Naive thymus-derived CD4-positive, alpha-beta T cell (primary cell): ENCODE measurements at regions of chr12 and their contacts with region 1.

Region 1: GRCh38 chr12:67161322-67161918 is 107.7 kb upstream of the CAND1 start:
- DNase-seq: peak in 7 of 9 donors; percentile 8 to 27 (median 21)
- ATAC-seq: no peak
- H3K4me3 ChIP-seq: no peak overlapping the region
- H3K4me3 Mint-ChIP-seq: no peak overlapping the region
- H3K27ac ChIP-seq: no peak overlapping the region
- H3K27ac Mint-ChIP-seq: no peak overlapping the region
- H3K4me1 ChIP-seq: no peaks in the 10 kb centered on the region
- H3K4me1 Mint-ChIP-seq: peaks cover 0 to 3% (median 0%) of the 10 kb centered on the region in 7 donors
- H3K27me3 ChIP-seq: no peaks in the 10 kb centered on the region
- H3K27me3 Mint-ChIP-seq: peaks cover 0 to 6% (median 4%) of the 10 kb centered on the region in 5 donors

Region 2: DNA sequence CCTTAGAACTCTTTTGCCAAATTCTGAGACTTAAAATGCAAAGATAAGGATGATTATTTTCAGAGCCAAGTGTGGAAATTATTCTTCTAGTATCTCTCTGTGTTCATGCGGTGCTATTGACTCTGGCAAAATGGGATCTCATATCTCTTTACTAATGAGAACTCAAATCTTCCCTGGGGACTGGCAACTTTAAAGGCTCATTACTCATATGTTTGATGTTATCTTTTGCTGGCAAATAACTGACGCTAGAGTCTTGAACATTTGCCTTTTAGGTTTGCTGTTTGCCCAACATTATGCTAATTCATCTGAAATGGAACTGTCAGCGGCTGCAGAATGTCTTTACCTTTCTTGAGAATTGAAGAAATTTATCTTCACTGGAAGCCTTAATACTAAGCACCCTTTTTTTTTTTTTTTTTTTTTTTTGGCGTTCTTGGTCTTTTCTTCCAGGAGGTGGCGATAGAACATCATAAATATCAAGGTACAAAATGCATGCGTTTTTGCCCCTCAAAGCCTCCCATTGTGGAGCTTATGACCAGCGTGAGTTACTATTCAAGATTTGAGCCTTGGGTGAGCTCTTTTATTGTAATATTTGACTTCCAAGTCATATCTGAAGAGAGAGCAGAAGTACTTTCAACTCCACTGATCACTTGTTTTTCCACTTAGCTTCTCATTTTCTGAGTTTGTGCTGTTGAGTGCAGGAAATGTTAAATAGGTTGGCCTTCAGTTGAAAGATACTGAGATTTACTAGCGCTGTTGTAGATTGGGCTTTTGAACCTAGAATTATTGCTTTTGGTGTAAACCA is 194.4 kb after region 1 on chr12:
- CTCF ChIA-PET with region 1: interaction called, 3 read pairs
- POLR2A ChIA-PET with region 1: no interaction called
- intact Hi-C with region 1: loop called in 1 of 2 experiments (anchors 1 kb)
- DNase-seq: peak in 7 of 9 donors; percentile 27 to 68 (median 61)
- ATAC-seq: peak; percentile 70
- H3K4me3 ChIP-seq: no peak overlapping the region
- H3K4me3 Mint-ChIP-seq: peak overlapping the region in 7 of 10 donors; percentile 23 to 65 (median 51)
- H3K27ac ChIP-seq: no peak overlapping the region
- H3K27ac Mint-ChIP-seq: peak overlapping the region in 3 of 9 donors; percentile 42 to 63 (median 54)
- H3K4me1 ChIP-seq: peaks cover 0 to 5% of the 10 kb centered on the region in 2 donors
- H3K4me1 Mint-ChIP-seq: peaks cover 2 to 21% (median 16%) of the 10 kb centered on the region in 7 donors
- H3K27me3 ChIP-seq: no peaks in the 10 kb centered on the region
- H3K27me3 Mint-ChIP-seq: no peaks in the 10 kb centered on the region